RWPE1 (cell line): ENCODE measurements at regions of chr17 and their contacts with region 1.

Region 1: GRCh38 chr17:45640141-45640850 is 143.8 kb upstream of the CRHR1 start:
- DNase-seq: peak; percentile 61
- H3K27ac ChIP-seq: no peak overlapping the region
- CTCF ChIP-seq: peak; percentile 99

Region 2: GRCh38 chr17:45828628-45829027 is 188.3 kb after region 1 on chr17:
- CTCF ChIA-PET with region 1: interaction called, 30 read pairs
- POLR2A ChIA-PET with region 1: no interaction called
- DNase-seq: peak; percentile 44
- H3K27ac ChIP-seq: no peak overlapping the region
- CTCF ChIP-seq: no peak; the same call in 1 of the 2 replicates

Region 3: GRCh38 chr17:45852535-45853297 is 212.4 kb after region 1 on chr17:
- CTCF ChIA-PET with region 1: interaction called, 12 read pairs
- POLR2A ChIA-PET with region 1: no interaction called
- DNase-seq: peak; percentile 56
- H3K27ac ChIP-seq: no peak overlapping the region
- CTCF ChIP-seq: peak; percentile 95